CD8-positive, alpha-beta memory T cell (primary cell): ENCODE measurements at regions of chr2 and their contacts with region 1.

Region 1: GRCh38 chr2:60998628-60999545 is 18.6 kb upstream of the PEX13 start:
- DNase-seq: peak in 3 of 5 donors; percentile 7 to 51 (median 49)
- H3K4me3 ChIP-seq: no peak overlapping the region
- H3K4me3 Mint-ChIP-seq: no peak overlapping the region
- H3K27ac ChIP-seq: no peak overlapping the region
- H3K27ac Mint-ChIP-seq: peak overlapping the region in 1 of 8 donors; percentile 52
- H3K4me1 ChIP-seq: no peaks in the 10 kb centered on the region
- H3K4me1 Mint-ChIP-seq: peaks cover 0 to 9% (median 2%) of the 10 kb centered on the region in 3 donors
- H3K27me3 ChIP-seq: no peaks in the 10 kb centered on the region
- H3K27me3 Mint-ChIP-seq: no peaks in the 10 kb centered on the region

Region 2: DNA sequence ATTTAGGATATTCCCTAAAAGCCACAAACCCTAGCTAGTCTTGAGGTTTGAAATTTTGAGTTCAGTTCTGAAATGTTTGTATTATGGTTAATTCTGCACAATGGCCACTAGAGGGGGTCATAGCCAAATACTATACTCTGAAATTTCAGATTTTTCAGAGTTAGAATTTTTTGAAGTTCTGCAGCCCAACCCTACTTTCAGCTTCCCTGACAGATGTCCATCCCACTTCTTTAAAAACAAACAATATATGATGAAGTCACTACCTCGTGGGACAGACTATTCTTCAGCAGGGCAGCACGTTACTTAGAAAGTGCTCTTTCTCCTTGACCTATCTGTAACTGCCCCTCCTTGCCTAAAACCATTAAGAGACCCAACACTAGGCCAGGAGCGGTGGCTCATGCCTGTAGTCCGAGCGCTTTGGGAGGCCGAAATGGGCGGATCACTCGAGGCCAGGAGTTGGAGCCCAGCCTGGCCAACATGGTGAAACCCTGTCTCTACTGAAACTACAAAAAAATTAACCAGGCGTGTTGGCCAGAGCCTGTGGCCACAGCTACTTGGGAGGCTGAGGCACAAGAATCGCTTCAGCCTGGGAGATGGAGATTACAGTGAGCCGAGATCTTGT is 291.0 kb before region 1 on chr2:
- CTCF ChIA-PET with region 1: interaction called, 77 read pairs
- POLR2A ChIA-PET with region 1: interaction called, 3 read pairs
- DNase-seq: peak in 2 of 5 donors; percentile 16 to 29
- H3K4me3 ChIP-seq: no peak overlapping the region
- H3K4me3 Mint-ChIP-seq: no peak overlapping the region
- H3K27ac ChIP-seq: no peak overlapping the region
- H3K27ac Mint-ChIP-seq: no peak overlapping the region
- H3K4me1 ChIP-seq: no peaks in the 10 kb centered on the region
- H3K4me1 Mint-ChIP-seq: no peaks in the 10 kb centered on the region
- H3K27me3 ChIP-seq: no peaks in the 10 kb centered on the region
- H3K27me3 Mint-ChIP-seq: peaks cover 2 to 20% of the 10 kb centered on the region in 2 donors

Region 3: DNA sequence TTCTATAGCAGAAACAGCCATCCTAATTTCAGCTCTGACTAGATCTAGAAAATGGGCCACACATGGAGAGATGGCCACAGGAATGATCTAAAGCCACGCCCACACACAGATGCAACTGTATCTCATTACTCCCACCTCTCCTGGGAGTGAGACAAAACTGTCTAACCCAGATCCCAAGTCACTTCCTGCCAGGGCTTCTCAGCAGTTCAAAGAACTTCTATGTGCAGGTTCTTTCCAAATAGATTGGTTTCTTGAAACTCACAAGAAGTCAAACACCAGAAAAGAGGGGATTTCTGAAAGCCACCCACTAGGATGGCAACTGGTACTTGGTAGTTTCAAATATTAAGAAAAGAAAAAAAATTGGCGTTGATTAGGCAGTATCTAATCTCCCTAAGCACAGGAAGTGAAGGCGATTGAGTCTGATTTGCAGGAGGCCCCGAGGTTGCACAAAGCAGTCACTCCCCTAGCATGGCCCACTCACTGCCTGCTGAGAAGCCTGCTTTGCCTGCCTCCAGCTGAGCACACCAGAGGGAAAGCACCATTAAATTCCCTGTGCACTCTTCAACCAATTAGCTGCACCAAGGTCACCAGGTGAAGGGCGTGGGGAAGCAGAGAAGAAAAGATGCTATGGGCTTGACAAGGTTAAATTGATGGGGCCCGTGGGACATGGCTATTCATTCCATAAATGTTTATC is 191.8 kb before region 1 on chr2:
- CTCF ChIA-PET with region 1: interaction called, 13 read pairs
- POLR2A ChIA-PET with region 1: interaction called, 3 read pairs
- DNase-seq: peak; percentile 10 to 48 (median 23)
- H3K4me3 ChIP-seq: peak overlapping the region; percentile 13
- H3K4me3 Mint-ChIP-seq: peak overlapping the region in 5 of 7 donors; percentile 43 to 67 (median 63)
- H3K27ac ChIP-seq: peak overlapping the region; percentile 4
- H3K27ac Mint-ChIP-seq: peak overlapping the region; percentile 72 to 97 (median 89)
- H3K4me1 ChIP-seq: peaks cover 29% of the 10 kb centered on the region
- H3K4me1 Mint-ChIP-seq: peaks cover 35 to 51% (median 40%) of the 10 kb centered on the region in 3 donors
- H3K27me3 ChIP-seq: no peaks in the 10 kb centered on the region
- H3K27me3 Mint-ChIP-seq: no peaks in the 10 kb centered on the region

Region 4: DNA sequence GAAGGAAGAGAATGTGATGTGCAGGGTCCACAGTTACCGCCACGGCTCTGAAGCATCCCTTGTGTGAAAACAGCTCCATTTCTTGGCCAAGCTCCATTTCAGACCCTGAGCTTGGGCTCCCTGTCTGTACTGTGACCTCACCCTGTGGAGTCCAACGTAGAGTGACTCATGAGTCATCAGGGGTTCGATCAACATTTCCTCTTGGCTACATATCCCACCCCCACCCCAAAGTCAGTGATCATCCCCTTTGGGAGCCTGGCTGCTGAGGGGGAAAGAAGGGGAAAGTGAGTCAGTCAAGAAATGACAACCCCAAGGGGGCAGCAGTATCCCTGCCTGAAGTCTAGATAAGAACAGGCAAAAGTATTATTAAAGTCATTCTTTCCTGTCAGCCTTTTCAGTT is 180.6 kb before region 1 on chr2:
- CTCF ChIA-PET with region 1: interaction called, 12 read pairs
- POLR2A ChIA-PET with region 1: no interaction called
- DNase-seq: peak in 3 of 5 donors; percentile 6 to 58 (median 8)
- H3K4me3 ChIP-seq: no peak overlapping the region
- H3K4me3 Mint-ChIP-seq: peak overlapping the region in 6 of 7 donors; percentile 19 to 66 (median 34)
- H3K27ac ChIP-seq: no peak overlapping the region
- H3K27ac Mint-ChIP-seq: peak overlapping the region; percentile 31 to 100 (median 94)
- H3K4me1 ChIP-seq: peaks cover 31% of the 10 kb centered on the region
- H3K4me1 Mint-ChIP-seq: peaks cover 45 to 56% (median 49%) of the 10 kb centered on the region in 3 donors
- H3K27me3 ChIP-seq: no peaks in the 10 kb centered on the region
- H3K27me3 Mint-ChIP-seq: peaks cover 0 to 7% of the 10 kb centered on the region in 2 donors

Region 5: GRCh38 chr2:60966507-60967405 is 32.1 kb before region 1 on chr2:
- CTCF ChIA-PET with region 1: interaction called, 16 read pairs
- POLR2A ChIA-PET with region 1: interaction called, 13 read pairs
- DNase-seq: peak in 1 of 5 donors; percentile 17
- H3K4me3 ChIP-seq: no peak overlapping the region
- H3K4me3 Mint-ChIP-seq: peak overlapping the region in 6 of 7 donors; percentile 32 to 75 (median 50)
- H3K27ac ChIP-seq: no peak overlapping the region
- H3K27ac Mint-ChIP-seq: peak overlapping the region; percentile 36 to 88 (median 84)
- H3K4me1 ChIP-seq: peaks cover 40% of the 10 kb centered on the region
- H3K4me1 Mint-ChIP-seq: peaks cover 44 to 58% (median 58%) of the 10 kb centered on the region in 3 donors
- H3K27me3 ChIP-seq: no peaks in the 10 kb centered on the region
- H3K27me3 Mint-ChIP-seq: no peaks in the 10 kb centered on the region

Region 6: GRCh38 chr2:62856228-62857040 is 1857.5 kb after region 1 on chr2:
- CTCF ChIA-PET with region 1: no interaction called
- POLR2A ChIA-PET with region 1: no interaction called
- DNase-seq: no peak
- H3K4me3 ChIP-seq: no peak overlapping the region
- H3K4me3 Mint-ChIP-seq: no peak overlapping the region
- H3K27ac ChIP-seq: no peak overlapping the region
- H3K27ac Mint-ChIP-seq: no peak overlapping the region
- H3K4me1 ChIP-seq: no peaks in the 10 kb centered on the region
- H3K4me1 Mint-ChIP-seq: no peaks in the 10 kb centered on the region
- H3K27me3 ChIP-seq: no peaks in the 10 kb centered on the region
- H3K27me3 Mint-ChIP-seq: peaks cover 0 to 2% of the 10 kb centered on the region in 2 donors